ENCODE measurements at regions of chr9 and their contacts with region 1.

Region 1: GRCh38 chr9:104991144-104991953 is 63.4 kb upstream of the ABCA1 start:
- DNase-seq: peak; percentile 64 to 93 (median 80)
- ATAC-seq: peak; percentile 78
- H3K4me3 ChIP-seq: peak overlapping the region; percentile 72
- H3K4me3 Mint-ChIP-seq: peak overlapping the region; percentile 98
- H3K27ac ChIP-seq: peak overlapping the region; percentile 93
- H3K27ac Mint-ChIP-seq: peak overlapping the region; percentile 100
- H3K4me1 ChIP-seq: peaks cover 38% of the 10 kb centered on the region
- H3K4me1 Mint-ChIP-seq: peaks cover 41% of the 10 kb centered on the region
- H3K27me3 ChIP-seq: no peaks in the 10 kb centered on the region
- H3K27me3 Mint-ChIP-seq: peaks cover 19% of the 10 kb centered on the region
- CTCF ChIP-seq: no peak

Region 2: DNA sequence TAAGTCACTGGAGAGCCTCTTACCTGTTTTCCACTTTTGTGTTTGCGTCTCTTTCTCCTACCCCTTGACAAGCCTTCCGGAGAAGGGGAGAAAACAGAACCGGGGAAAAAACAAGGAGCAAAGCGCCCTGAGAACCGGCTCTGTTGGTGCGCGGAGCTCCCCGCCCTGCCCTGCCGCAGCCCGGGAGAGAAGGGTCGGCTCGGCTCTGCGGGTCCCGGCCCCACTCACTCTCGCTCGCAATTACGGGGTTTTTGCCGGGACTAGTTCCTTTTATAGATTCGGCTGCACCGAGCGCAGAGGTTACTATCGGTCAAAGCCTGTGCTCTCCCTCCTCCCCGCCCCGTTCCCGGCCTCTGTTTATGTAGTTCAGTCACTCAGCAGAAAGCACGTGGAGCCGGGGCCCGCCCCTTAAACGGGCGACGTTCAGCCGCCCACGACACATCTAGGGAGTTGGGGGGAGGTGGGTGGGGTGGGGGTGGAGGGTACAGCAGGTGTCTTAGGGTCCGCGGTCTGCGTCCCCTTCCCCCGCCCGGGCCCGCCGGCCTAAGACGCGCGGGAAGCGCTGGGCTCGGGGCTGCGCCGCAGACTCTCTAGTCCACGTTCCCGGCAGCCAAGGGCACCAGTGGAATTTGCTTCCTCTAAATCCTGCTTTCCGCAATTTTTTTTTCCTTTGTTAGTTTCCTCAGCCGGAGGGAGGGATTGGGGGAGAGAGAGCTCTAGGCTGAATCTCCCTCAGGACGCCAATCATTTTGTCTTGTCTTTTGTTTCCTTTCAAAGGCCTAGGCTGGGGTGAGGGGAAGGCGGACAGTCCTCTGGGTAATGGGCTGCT is 63.2 kb before region 1 on chr9 and contains the start of gene ABCA1:
- CTCF ChIA-PET with region 1: no interaction called
- POLR2A ChIA-PET with region 1: interaction called, 5 read pairs
- intact Hi-C with region 1: loop called in 1 of 2 experiments (anchors 1 kb)
- DNase-seq: peak; percentile 57 to 89 (median 74)
- ATAC-seq: peak; percentile 81
- H3K4me3 ChIP-seq: peak within 1 kb of the TSS; percentile 69
- H3K4me3 Mint-ChIP-seq: peak within 1 kb of the TSS; percentile 92
- H3K27ac ChIP-seq: peak within 1 kb of the TSS in 1 of 2 donors; percentile 15
- H3K27ac Mint-ChIP-seq: peak within 1 kb of the TSS; percentile 86
- H3K4me1 ChIP-seq: peaks cover 27% of the 10 kb centered on the region
- H3K4me1 Mint-ChIP-seq: peaks cover 26% of the 10 kb centered on the region
- H3K27me3 ChIP-seq: no peaks in the 10 kb centered on the region
- H3K27me3 Mint-ChIP-seq: no peaks in the 10 kb centered on the region
- CTCF ChIP-seq: no peak
- total RNA-seq, gene ABCA1: 14.1 to 16.9 TPM

Region 3: DNA sequence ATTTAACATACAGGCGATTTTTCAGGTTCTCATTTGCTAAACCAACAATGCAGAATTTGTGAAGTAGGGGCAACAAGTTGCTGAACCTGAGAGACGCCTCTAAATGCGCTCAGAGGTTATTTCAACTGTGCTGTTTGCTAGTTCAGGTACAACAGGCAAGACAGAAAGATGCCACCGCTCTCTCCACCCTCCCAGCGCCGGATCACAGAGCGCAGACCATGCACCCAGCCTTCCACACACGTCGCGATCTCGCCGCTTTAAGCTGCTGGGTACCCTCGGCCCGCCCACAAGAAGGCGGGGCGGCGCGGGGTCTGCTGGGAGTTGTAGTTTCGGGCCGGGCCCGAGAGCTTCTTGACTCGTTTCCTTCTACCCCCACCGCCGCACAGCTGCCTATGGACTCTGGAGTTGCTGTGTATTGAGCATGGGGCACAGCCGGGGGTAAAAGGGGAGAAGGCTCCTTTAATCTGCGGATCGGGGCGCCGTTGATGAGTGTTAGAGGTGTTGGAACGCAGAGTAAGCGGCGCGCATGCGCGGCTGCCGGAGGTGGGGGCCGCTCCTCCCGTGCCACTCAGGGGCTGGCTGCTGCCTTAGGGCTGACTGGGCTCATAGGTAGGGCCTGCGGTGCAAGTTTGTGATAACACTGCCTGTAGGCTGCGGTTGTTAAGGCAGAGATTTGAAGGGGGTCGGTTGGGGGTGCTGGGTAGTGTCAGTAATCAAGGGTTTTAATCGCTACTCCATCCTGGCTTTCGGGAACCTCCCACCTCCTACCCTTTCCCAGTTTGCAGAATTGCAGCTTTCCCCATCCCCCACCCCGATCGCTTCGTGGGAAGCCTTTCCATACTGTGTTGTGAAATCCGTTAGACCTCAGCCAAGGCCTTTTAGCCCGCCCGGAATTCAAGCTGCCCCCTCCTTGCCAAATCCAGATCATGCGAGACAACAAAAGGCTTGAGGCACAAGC is 23.0 kb before region 1 on chr9:
- CTCF ChIA-PET with region 1: no interaction called
- POLR2A ChIA-PET with region 1: interaction called, 3 read pairs
- intact Hi-C with region 1: loop called (anchors 1 to 2 kb)
- DNase-seq: peak; percentile 80 to 92 (median 86)
- ATAC-seq: peak; percentile 97
- H3K4me3 ChIP-seq: peak overlapping the region; percentile 75
- H3K4me3 Mint-ChIP-seq: peak overlapping the region; percentile 95
- H3K27ac ChIP-seq: no peak overlapping the region
- H3K27ac Mint-ChIP-seq: peak overlapping the region; percentile 77
- H3K4me1 ChIP-seq: peaks cover 14% of the 10 kb centered on the region
- H3K4me1 Mint-ChIP-seq: peaks cover 27% of the 10 kb centered on the region
- H3K27me3 ChIP-seq: no peaks in the 10 kb centered on the region
- H3K27me3 Mint-ChIP-seq: peaks cover 8% of the 10 kb centered on the region
- CTCF ChIP-seq: no peak

Region 4: GRCh38 chr9:105127863-105128220 is 136.5 kb after region 1 on chr9:
- CTCF ChIA-PET with region 1: no interaction called
- POLR2A ChIA-PET with region 1: interaction called, 15 read pairs
- intact Hi-C with region 1: loop called (anchors 1 to 5 kb)
- DNase-seq: peak; percentile 30 to 92 (median 46)
- ATAC-seq: peak; percentile 99
- H3K4me3 ChIP-seq: peak overlapping the region; percentile 3
- H3K4me3 Mint-ChIP-seq: peak overlapping the region; percentile 31
- H3K27ac ChIP-seq: no peak overlapping the region
- H3K27ac Mint-ChIP-seq: peak overlapping the region; percentile 73
- H3K4me1 ChIP-seq: peaks cover 55% of the 10 kb centered on the region
- H3K4me1 Mint-ChIP-seq: peaks cover 65% of the 10 kb centered on the region
- H3K27me3 ChIP-seq: no peaks in the 10 kb centered on the region
- H3K27me3 Mint-ChIP-seq: no peaks in the 10 kb centered on the region
- CTCF ChIP-seq: no peak

Region 5: DNA sequence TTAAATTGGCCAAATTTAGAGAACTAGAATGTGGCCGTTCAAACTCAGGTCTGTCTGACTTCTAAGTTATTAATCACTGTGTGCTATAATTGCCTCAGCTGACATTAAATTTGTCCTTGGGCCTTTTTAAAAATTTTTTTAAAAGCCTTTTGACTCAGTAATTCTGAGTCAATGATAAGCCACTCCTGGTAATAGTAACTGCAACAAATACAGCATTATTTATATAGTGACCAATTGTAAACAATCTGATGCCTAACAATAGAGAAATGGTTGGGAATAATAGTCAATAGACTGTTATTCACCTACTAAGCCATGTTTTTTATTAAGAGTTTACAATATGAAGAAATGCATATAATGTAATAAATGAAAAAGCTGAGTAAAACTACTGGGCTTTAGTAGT is 385.5 kb after region 1 on chr9:
- CTCF ChIA-PET with region 1: no interaction called
- POLR2A ChIA-PET with region 1: no interaction called
- intact Hi-C with region 1: no loop called
- DNase-seq: no peak
- ATAC-seq: no peak
- H3K4me3 ChIP-seq: no peak overlapping the region
- H3K4me3 Mint-ChIP-seq: no peak overlapping the region
- H3K27ac ChIP-seq: no peak overlapping the region
- H3K27ac Mint-ChIP-seq: no peak overlapping the region
- H3K4me1 ChIP-seq: no peaks in the 10 kb centered on the region
- H3K4me1 Mint-ChIP-seq: no peaks in the 10 kb centered on the region
- H3K27me3 ChIP-seq: no peaks in the 10 kb centered on the region
- H3K27me3 Mint-ChIP-seq: no peaks in the 10 kb centered on the region
- CTCF ChIP-seq: no peak

Region 6: GRCh38 chr9:105405514-105406131 is 414.3 kb after region 1 on chr9:
- CTCF ChIA-PET with region 1: no interaction called
- POLR2A ChIA-PET with region 1: interaction called, 10 read pairs
- intact Hi-C with region 1: loop called in 1 of 2 experiments (anchors 5 kb)
- DNase-seq: peak in 13 of 14 experiments; percentile 20 to 87 (median 43)
- ATAC-seq: peak; percentile 90
- H3K4me3 ChIP-seq: no peak overlapping the region
- H3K4me3 Mint-ChIP-seq: peak overlapping the region; percentile 21
- H3K27ac ChIP-seq: no peak overlapping the region
- H3K27ac Mint-ChIP-seq: peak overlapping the region; percentile 70
- H3K4me1 ChIP-seq: peaks cover 24% of the 10 kb centered on the region
- H3K4me1 Mint-ChIP-seq: peaks cover 33% of the 10 kb centered on the region
- H3K27me3 ChIP-seq: peaks cover 25 to 33% of the 10 kb centered on the region in 2 experiments
- H3K27me3 Mint-ChIP-seq: peaks cover 73% of the 10 kb centered on the region
- CTCF ChIP-seq: no peak